RWPE1 (cell line): ENCODE measurements at regions of chr16 and their contacts with region 1.

Region 1: GRCh38 chr16:77584205-77584859 is 138.0 kb upstream of the NUDT7 start:
- DNase-seq: peak; percentile 50
- H3K27ac ChIP-seq: no peak overlapping the region
- CTCF ChIP-seq: peak; percentile 83

Region 2: DNA sequence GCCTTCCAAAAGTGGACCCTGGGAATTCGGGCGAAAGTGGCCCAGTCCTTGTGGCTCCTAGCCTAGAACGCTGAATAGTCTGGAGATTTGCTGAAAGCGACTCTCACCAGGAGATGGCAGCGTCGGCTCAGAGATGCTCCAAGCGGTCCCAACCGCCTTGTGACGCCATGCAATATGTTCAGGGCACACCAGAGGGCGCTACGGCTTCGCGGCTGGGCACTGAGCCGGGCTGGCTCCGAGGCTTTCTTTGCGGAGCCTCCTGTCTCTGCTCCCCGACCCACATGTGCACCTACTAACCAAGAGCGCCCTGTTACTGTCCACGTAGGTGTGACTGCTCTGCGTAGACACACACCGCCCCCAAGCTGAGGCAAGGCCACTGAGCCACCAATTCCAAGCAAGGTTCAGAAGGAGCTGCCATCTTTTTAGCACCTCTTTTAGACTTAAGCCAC is 348.2 kb before region 1 on chr16:
- CTCF ChIA-PET with region 1: interaction called, 34 read pairs
- POLR2A ChIA-PET with region 1: no interaction called
- DNase-seq: peak; percentile 81
- H3K27ac ChIP-seq: no peak overlapping the region
- CTCF ChIP-seq: peak; percentile 94

Region 3: GRCh38 chr16:77613095-77613494 is 28.8 kb after region 1 on chr16:
- CTCF ChIA-PET with region 1: no interaction called
- POLR2A ChIA-PET with region 1: no interaction called
- DNase-seq: no peak
- H3K27ac ChIP-seq: no peak overlapping the region
- CTCF ChIP-seq: no peak

Region 4: GRCh38 chr16:77744141-77744540 is 159.8 kb after region 1 on chr16:
- CTCF ChIA-PET with region 1: no interaction called
- POLR2A ChIA-PET with region 1: no interaction called
- DNase-seq: no peak
- H3K27ac ChIP-seq: no peak overlapping the region
- CTCF ChIP-seq: no peak